ENCODE measurements at regions of chr10 and their contacts with region 1.

Region 1: GRCh38 chr10:46560381-46560780 is 3.9 kb upstream of the GPRIN2 start:
- DNase-seq: no peak
- H3K4me3 ChIP-seq: no peak overlapping the region
- H3K27ac ChIP-seq: no peak overlapping the region
- H3K4me1 ChIP-seq: no peaks in the 10 kb centered on the region
- H3K27me3 ChIP-seq: peaks cover 50% of the 10 kb centered on the region
- CTCF ChIP-seq: no peak

Region 2: DNA sequence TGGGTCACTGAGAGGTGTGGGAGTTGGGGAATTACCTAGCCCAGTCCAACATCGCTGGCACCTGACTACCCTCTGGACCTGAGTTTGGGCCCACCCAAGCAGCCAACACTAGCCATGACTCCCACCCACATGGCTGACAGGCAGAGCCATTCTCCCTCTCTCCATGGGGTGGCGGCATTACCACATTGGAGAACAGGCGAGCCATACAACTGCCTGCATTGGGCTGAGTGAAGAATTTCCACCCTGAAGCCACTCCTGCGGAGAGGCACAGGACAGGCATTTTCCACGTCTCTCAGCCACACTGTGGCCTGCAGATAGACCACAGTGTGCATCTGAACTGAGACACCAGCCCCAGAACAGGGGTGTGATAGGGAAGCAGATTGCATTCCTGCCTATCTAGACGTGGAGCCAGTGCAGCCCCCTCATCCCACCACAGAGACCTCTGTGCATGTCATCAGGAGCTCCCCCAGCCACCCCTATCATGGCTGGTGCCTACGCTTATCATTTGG is 331.8 kb before region 1 on chr10:
- CTCF ChIA-PET with region 1: no interaction called
- POLR2A ChIA-PET with region 1: no interaction called
- intact Hi-C with region 1: loop called (anchors 5 kb)
- DNase-seq: peak; percentile 78
- H3K4me3 ChIP-seq: no peak overlapping the region
- H3K27ac ChIP-seq: no peak overlapping the region
- H3K4me1 ChIP-seq: no peaks in the 10 kb centered on the region
- H3K27me3 ChIP-seq: no peaks in the 10 kb centered on the region
- CTCF ChIP-seq: peak; percentile 84

Region 3: GRCh38 chr10:46273506-46274477 is 286.6 kb before region 1 on chr10:
- CTCF ChIA-PET with region 1: no interaction called
- POLR2A ChIA-PET with region 1: no interaction called
- intact Hi-C with region 1: no loop called
- DNase-seq: no peak
- H3K4me3 ChIP-seq: no peak overlapping the region
- H3K27ac ChIP-seq: no peak overlapping the region
- H3K4me1 ChIP-seq: no peaks in the 10 kb centered on the region
- H3K27me3 ChIP-seq: peaks cover 10% of the 10 kb centered on the region
- CTCF ChIP-seq: no peak

Measured in A673 (cell line).